ENCODE measurements at regions of chr7 and their contacts with region 1.

Region 1: GRCh38 chr7:105013221-105013815 is 687 bp upstream of the KMT2E start:
- DNase-seq: peak; percentile 93 to 98 (median 96)
- ATAC-seq: peak; percentile 68
- H3K4me3 ChIP-seq: peak overlapping the region; percentile 99
- H3K4me3 Mint-ChIP-seq: peak overlapping the region; percentile 96 to 100 (median 98)
- H3K27ac ChIP-seq: peak overlapping the region; percentile 97
- H3K27ac Mint-ChIP-seq: peak overlapping the region; percentile 99 to 100 (median 100)
- H3K4me1 ChIP-seq: peaks cover 14 to 24% of the 10 kb centered on the region in 2 donors
- H3K4me1 Mint-ChIP-seq: peaks cover 31 to 50% (median 41%) of the 10 kb centered on the region in 7 donors
- H3K27me3 ChIP-seq: no peaks in the 10 kb centered on the region
- H3K27me3 Mint-ChIP-seq: peaks cover 0 to 8% (median 0%) of the 10 kb centered on the region in 5 donors

Region 2: GRCh38 chr7:103344453-103345149 is 1668.7 kb before region 1 on chr7 and contains the start of gene DNAJC2:
- CTCF ChIA-PET with region 1: no interaction called
- POLR2A ChIA-PET with region 1: no interaction called
- intact Hi-C with region 1: loop called (anchors 5 to 10 kb)
- DNase-seq: peak; percentile 61 to 88 (median 83)
- ATAC-seq: peak; percentile 94
- H3K4me3 ChIP-seq: peak within 1 kb of the TSS; percentile 97
- H3K4me3 Mint-ChIP-seq: peak within 1 kb of the TSS; percentile 93 to 100 (median 98)
- H3K27ac ChIP-seq: peak within 1 kb of the TSS; percentile 86
- H3K27ac Mint-ChIP-seq: peak within 1 kb of the TSS; percentile 93 to 99 (median 97)
- H3K4me1 ChIP-seq: peaks cover 22 to 26% of the 10 kb centered on the region in 2 donors
- H3K4me1 Mint-ChIP-seq: peaks cover 31 to 84% (median 72%) of the 10 kb centered on the region in 7 donors
- H3K27me3 ChIP-seq: no peaks in the 10 kb centered on the region
- H3K27me3 Mint-ChIP-seq: no peaks in the 10 kb centered on the region
- total RNA-seq, gene DNAJC2: 30.1 to 52.7 (median 38.0) TPM

Region 3: GRCh38 chr7:104772405-104773345 is 240.6 kb before region 1 on chr7:
- CTCF ChIA-PET with region 1: no interaction called
- POLR2A ChIA-PET with region 1: no interaction called
- intact Hi-C with region 1: no loop called
- DNase-seq: no peak
- ATAC-seq: no peak
- H3K4me3 ChIP-seq: no peak overlapping the region
- H3K4me3 Mint-ChIP-seq: no peak overlapping the region
- H3K27ac ChIP-seq: no peak overlapping the region
- H3K27ac Mint-ChIP-seq: no peak overlapping the region
- H3K4me1 ChIP-seq: no peaks in the 10 kb centered on the region
- H3K4me1 Mint-ChIP-seq: no peaks in the 10 kb centered on the region
- H3K27me3 ChIP-seq: no peaks in the 10 kb centered on the region
- H3K27me3 Mint-ChIP-seq: peaks cover 4 to 30% (median 17%) of the 10 kb centered on the region in 5 donors

Region 4: GRCh38 chr7:105003275-105003674 is 10.0 kb before region 1 on chr7:
- CTCF ChIA-PET with region 1: interaction called, 5 read pairs
- POLR2A ChIA-PET with region 1: interaction called, 28 read pairs
- intact Hi-C with region 1: loop called in 1 of 2 experiments (anchors 1 kb)
- DNase-seq: peak in 1 of 9 donors; percentile 50
- ATAC-seq: peak; percentile 52
- H3K4me3 ChIP-seq: peak overlapping the region; percentile 27
- H3K4me3 Mint-ChIP-seq: peak overlapping the region; percentile 61 to 80 (median 65)
- H3K27ac ChIP-seq: peak overlapping the region; percentile 57
- H3K27ac Mint-ChIP-seq: peak overlapping the region; percentile 47 to 92 (median 78)
- H3K4me1 ChIP-seq: peaks cover 66 to 76% of the 10 kb centered on the region in 2 donors
- H3K4me1 Mint-ChIP-seq: peaks cover 66 to 96% (median 90%) of the 10 kb centered on the region in 7 donors
- H3K27me3 ChIP-seq: no peaks in the 10 kb centered on the region
- H3K27me3 Mint-ChIP-seq: no peaks in the 10 kb centered on the region

Region 5: DNA sequence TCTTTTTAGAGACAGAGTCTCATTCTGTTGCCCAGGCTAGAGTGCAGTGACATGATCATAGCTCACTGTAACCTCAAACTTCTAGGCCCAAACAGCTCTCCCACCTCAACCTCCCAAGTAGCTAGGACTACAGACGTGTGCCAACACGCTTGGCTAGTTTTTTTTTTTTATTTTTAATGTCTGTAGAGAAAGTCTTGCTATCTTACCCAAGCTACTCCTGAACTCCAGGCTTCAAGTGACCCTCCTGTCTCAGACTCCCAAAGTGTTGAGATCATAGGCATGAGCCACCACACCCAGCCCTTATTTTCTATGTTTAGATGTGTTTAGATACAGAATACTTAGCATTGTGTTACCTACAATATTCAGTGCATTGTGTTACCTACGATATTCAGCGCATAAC is 47.1 kb after region 1 on chr7:
- CTCF ChIA-PET with region 1: interaction called, 6 read pairs
- POLR2A ChIA-PET with region 1: interaction called, 34 read pairs
- intact Hi-C with region 1: no loop called
- DNase-seq: no peak
- ATAC-seq: no peak
- H3K4me3 ChIP-seq: no peak overlapping the region
- H3K4me3 Mint-ChIP-seq: no peak overlapping the region
- H3K27ac ChIP-seq: no peak overlapping the region
- H3K27ac Mint-ChIP-seq: peak overlapping the region in 6 of 9 donors; percentile 12 to 85 (median 75)
- H3K4me1 ChIP-seq: peaks cover 4 to 11% of the 10 kb centered on the region in 2 donors
- H3K4me1 Mint-ChIP-seq: peaks cover 37 to 90% (median 81%) of the 10 kb centered on the region in 7 donors
- H3K27me3 ChIP-seq: no peaks in the 10 kb centered on the region
- H3K27me3 Mint-ChIP-seq: no peaks in the 10 kb centered on the region

Region 6: DNA sequence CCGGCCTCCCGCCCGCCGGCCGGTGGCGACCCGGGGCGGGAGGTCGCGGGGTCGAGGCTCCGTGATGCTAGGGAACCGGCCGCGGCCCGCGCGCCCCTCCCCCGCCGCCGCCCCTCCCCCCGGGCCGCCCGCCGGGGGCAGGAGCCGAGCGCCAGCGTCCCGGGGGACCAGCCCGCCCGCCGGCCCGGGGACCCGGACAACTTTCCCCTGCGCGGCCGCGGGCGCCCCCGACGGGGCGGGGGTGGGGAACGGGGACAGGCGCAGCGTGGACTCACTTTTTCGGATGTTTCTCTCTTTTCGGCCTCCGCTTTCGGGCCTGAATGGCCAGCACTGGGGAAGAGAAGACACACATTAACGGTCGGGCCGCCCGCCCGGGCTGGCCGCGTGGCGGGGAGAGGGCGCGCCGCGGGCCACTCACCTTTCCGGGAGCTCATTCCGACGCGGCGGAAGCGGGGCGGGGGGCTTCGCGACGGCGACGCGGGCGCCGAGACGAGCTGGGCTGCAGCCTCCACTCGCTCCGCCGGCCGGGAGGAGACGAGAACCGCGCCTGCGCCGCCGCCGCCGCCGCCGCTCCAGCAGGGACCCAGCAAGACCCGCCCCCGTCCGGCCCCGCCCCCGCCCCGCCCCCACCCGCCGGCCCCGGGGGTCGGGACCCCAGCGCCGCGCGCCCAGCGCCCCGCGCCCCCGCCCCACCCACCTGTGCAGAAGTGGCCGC is 375.2 kb after region 1 on chr7 and contains the start of gene SRPK2:
- CTCF ChIA-PET with region 1: interaction called, 3 read pairs
- POLR2A ChIA-PET with region 1: interaction called, 9 read pairs
- intact Hi-C with region 1: loop called in 1 of 2 experiments (anchors 2 kb)
- DNase-seq: peak; percentile 61 to 79 (median 73)
- ATAC-seq: peak; percentile 86
- H3K4me3 ChIP-seq: peak within 1 kb of the TSS; percentile 77
- H3K4me3 Mint-ChIP-seq: peak within 1 kb of the TSS; percentile 91 to 100 (median 98)
- H3K27ac ChIP-seq: peak within 1 kb of the TSS; percentile 82
- H3K27ac Mint-ChIP-seq: peak within 1 kb of the TSS; percentile 90 to 99 (median 95)
- H3K4me1 ChIP-seq: peaks cover 5 to 12% of the 10 kb centered on the region in 2 donors
- H3K4me1 Mint-ChIP-seq: peaks cover 19 to 46% (median 40%) of the 10 kb centered on the region in 7 donors
- H3K27me3 ChIP-seq: no peaks in the 10 kb centered on the region
- H3K27me3 Mint-ChIP-seq: peaks cover 0 to 2% (median 0%) of the 10 kb centered on the region in 5 donors
- total RNA-seq, gene SRPK2: 45.1 to 56.7 (median 46.8) TPM

Region 7: GRCh38 chr7:106346678-106347217 is 1333.4 kb after region 1 on chr7:
- CTCF ChIA-PET with region 1: no interaction called
- POLR2A ChIA-PET with region 1: no interaction called
- intact Hi-C with region 1: loop called in 1 of 2 experiments (anchors 5 kb)
- DNase-seq: peak in 8 of 9 donors; percentile 28 to 61 (median 50)
- ATAC-seq: peak; percentile 78
- H3K4me3 ChIP-seq: no peak overlapping the region
- H3K4me3 Mint-ChIP-seq: peak overlapping the region in 1 of 10 donors; percentile 47
- H3K27ac ChIP-seq: no peak overlapping the region
- H3K27ac Mint-ChIP-seq: peak overlapping the region in 2 of 9 donors; percentile 19 to 94
- H3K4me1 ChIP-seq: peaks cover 6 to 19% of the 10 kb centered on the region in 2 donors
- H3K4me1 Mint-ChIP-seq: peaks cover 5 to 35% (median 13%) of the 10 kb centered on the region in 7 donors
- H3K27me3 ChIP-seq: no peaks in the 10 kb centered on the region
- H3K27me3 Mint-ChIP-seq: peaks cover 1 to 61% (median 31%) of the 10 kb centered on the region in 5 donors

Measured in naive thymus-derived CD4-positive, alpha-beta T cell (primary cell).